Uterus (tissue), 4 donors: ENCODE measurements at regions of chr16 and their contacts with region 1.

Region 1: DNA sequence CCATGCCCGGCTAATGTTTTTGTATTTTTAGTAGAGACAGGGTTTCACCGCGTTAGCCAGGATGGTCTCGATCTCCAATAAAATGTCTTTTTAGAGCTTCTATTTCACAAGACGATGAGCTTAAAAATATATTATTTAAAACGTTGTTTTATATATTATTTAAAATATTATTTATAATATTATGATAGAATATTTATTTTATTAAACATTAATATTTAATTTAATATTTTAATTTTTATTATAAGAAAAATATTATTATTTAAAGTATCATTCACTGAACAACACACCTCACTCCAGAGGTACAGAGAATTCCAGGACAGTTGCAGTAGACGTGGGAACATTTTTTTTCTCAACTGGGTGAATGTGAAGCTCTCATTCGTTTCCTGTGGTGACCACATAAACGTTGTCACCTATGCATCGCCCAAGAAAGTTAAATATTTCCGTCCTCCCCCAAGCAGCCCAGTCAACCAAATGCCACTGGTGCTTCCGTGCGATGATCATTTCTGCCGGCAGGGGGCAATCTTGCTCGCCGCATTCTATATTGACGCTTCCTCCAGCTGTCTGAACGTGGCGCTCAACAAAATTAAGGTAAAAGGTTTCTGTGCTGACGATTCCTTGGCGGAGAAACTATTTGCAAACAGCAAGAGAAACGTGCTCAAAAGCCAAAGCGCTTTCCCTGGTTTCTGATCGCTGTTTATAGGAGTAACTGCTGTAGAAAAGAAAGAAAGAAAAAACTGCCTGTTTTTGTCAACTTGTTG is 41.7 kb upstream of the PRSS54 start:
- DNase-seq: peak; percentile 78 to 81
- H3K4me3 ChIP-seq: no peak overlapping the region
- H3K27ac ChIP-seq: no peak overlapping the region
- H3K4me1 ChIP-seq: no peaks in the 10 kb centered on the region
- H3K27me3 ChIP-seq: no peaks in the 10 kb centered on the region
- CTCF ChIP-seq: peak; percentile 80 to 89 (median 84)
- POLR2A ChIP-seq: no peak

Region 2: GRCh38 chr16:58063377-58064076 is 273.0 kb before region 1 on chr16:
- intact Hi-C with region 1: no loop called
- DNase-seq: no peak
- H3K4me3 ChIP-seq: no peak overlapping the region
- H3K27ac ChIP-seq: no peak overlapping the region
- H3K4me1 ChIP-seq: no peaks in the 10 kb centered on the region
- H3K27me3 ChIP-seq: no peaks in the 10 kb centered on the region
- CTCF ChIP-seq: no peak
- POLR2A ChIP-seq: no peak

Region 3: DNA sequence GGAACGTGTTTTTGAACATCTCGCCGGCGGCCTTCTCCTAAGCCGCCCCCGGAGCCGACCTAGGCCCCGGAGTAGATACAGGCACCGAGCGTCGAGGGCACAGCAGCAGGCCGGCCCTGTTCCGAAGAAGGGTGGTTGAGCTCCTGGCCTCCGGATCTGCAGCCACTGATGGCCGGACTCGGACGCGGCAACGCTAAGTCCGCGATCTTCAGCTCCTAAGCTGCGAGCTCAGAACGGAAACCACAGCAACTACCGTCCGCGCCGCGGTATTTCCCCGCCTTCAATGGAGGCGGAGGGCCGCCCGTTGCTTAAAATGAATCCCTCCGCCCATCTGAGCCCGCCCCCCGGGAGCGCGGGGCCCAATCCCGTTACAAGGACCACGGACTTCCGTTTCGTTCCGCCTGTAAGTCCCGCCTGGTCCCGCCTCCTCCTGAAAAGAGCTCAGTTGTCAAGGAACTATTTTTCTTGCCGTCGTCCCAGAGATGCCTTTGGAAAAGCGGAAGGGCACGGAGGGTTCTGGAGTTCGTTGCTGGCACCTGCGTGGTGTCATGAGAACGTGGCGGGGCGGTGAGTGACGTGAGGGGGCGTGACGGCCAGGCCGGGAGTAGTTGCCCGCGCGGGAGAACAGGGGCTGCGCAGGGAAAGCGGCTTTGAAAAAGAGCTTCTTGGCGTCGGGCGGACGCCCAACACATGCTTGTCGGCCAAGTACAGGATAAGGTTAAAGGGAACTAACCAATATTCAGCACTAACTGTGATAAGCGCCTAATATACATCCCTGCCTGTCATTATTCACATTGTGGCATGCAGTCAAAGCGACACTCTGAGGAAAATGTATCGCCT is 207.2 kb before region 1 on chr16 and contains the start of gene CFAP20:
- intact Hi-C with region 1: no loop called
- DNase-seq: peak; percentile 97 to 99
- H3K4me3 ChIP-seq: peak within 1 kb of the TSS; percentile 93 to 97
- H3K27ac ChIP-seq: peak within 1 kb of the TSS; percentile 83 to 87
- H3K4me1 ChIP-seq: peaks cover 11 to 12% of the 10 kb centered on the region in 2 donors
- H3K27me3 ChIP-seq: no peaks in the 10 kb centered on the region
- CTCF ChIP-seq: peak in 3 of 4 experiments; percentile 18 to 22 (median 22)
- POLR2A ChIP-seq: peak; percentile 90 to 97
- total RNA-seq, gene CFAP20: 23.7 to 88.8 (median 59.2) TPM

Region 4: DNA sequence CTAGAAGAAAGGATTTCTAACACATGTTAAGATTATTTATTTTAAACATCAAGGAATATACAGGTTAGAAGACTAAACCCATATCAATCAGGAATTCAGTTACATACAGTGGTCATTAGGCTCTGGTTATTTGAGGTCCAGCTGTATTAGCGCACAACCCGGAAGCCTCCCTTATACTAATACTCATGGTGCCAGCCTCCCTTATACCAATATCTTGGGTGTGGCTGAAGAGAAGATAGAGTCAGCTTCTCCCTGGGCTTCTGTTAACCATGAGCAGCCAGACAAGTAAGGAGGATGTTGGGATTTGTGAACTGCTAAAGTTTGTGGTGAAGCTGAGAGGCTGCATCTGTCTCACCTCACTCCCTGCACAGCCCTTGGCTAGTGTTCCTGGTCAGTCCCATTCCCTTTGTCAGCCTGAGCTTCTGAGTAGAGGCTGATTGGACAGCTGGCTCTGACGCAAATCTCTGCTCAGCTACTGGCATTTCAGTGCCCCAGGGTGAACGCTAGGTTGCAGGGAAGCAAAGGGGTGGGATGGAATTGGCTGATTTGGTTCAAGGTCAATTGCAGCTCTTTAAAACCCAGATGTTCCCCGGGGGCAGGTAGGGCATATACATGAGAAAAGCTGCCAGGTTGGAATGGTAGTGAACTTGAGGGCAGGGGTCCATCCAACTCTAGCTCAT is 316.1 kb after region 1 on chr16:
- intact Hi-C with region 1: loop called (anchors 10 kb)
- DNase-seq: no peak
- H3K4me3 ChIP-seq: no peak overlapping the region
- H3K27ac ChIP-seq: no peak overlapping the region
- H3K4me1 ChIP-seq: no peaks in the 10 kb centered on the region
- H3K27me3 ChIP-seq: no peaks in the 10 kb centered on the region
- CTCF ChIP-seq: no peak
- POLR2A ChIP-seq: no peak